ENCODE measurements at regions of chr2 and their contacts with region 1.

Region 1: GRCh38 chr2:238426568-238427434 is at the start of gene ASB1:
- DNase-seq: peak; percentile 84
- ATAC-seq: peak; percentile 81
- H3K4me3 Mint-ChIP-seq: peak within 1 kb of the TSS; percentile 91
- H3K27ac Mint-ChIP-seq: peak within 1 kb of the TSS; percentile 96
- H3K4me1 Mint-ChIP-seq: peaks cover 35% of the 10 kb centered on the region
- H3K27me3 Mint-ChIP-seq: no peaks in the 10 kb centered on the region
- total RNA-seq, gene ASB1: 31.7 to 33.4 TPM

Region 2: DNA sequence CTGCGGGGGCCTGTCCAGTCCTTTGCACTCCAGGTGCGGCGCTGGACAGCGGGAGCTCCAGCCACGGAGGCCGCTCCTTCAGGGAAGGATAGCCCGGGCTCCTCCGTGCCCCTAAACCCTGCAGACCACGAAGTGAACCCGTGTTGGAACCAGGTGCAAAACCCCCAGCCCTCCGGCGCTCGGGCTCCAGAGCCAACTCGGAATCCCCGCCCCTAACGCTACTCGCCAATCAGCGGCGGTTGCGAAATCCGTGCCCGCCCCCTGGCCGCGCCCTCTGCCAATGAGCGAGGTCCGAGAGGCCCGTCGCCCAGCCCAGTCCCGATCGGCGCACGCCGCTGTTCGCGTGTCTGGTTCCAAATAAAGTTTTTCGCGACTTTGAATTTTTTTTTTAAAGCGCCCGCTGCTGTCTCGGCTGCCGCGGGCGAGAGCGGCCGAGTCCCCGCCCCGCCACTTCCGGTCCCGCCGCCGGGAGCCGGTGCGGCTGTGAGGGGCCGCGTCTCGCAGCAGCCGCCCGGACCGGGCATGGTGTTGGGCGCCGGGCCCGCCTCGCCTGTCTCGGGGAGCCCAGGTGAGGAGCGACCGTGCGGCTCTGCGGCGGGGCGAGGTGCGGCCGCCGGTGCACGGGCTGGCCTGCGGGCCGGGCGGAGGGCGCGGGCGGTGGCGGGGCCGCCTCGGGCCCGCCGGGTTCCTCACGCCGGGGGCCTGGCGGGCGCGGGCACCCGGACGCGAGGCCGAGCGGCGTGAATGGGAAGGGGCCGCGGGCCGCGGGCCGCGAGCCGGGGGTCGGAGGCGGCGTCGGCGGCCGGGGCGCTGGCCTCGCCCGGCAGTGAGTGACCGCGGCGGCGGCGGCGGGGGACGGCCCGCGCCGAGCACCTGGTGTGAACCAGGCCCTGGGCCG is 460.0 kb before region 1 on chr2 and contains the start of gene UBE2F:
- CTCF ChIA-PET with region 1: no interaction called
- POLR2A ChIA-PET with region 1: no interaction called
- intact Hi-C with region 1: loop called in 1 of 2 experiments (anchors 2 kb)
- DNase-seq: peak; percentile 98
- ATAC-seq: peak; percentile 95
- H3K4me3 Mint-ChIP-seq: peak within 1 kb of the TSS; percentile 78
- H3K27ac Mint-ChIP-seq: peak within 1 kb of the TSS; percentile 88
- H3K4me1 Mint-ChIP-seq: peaks cover 38% of the 10 kb centered on the region
- H3K27me3 Mint-ChIP-seq: no peaks in the 10 kb centered on the region
- total RNA-seq, gene UBE2F: 59.2 to 75.5 TPM

Region 3: GRCh38 chr2:238288650-238289573 is 137.9 kb before region 1 on chr2:
- CTCF ChIA-PET with region 1: no interaction called
- POLR2A ChIA-PET with region 1: no interaction called
- intact Hi-C with region 1: loop called (anchors 1 to 5 kb)
- DNase-seq: peak; percentile 98
- ATAC-seq: peak; percentile 86
- H3K4me3 Mint-ChIP-seq: peak overlapping the region; percentile 74
- H3K27ac Mint-ChIP-seq: peak overlapping the region; percentile 82
- H3K4me1 Mint-ChIP-seq: peaks cover 32% of the 10 kb centered on the region
- H3K27me3 Mint-ChIP-seq: no peaks in the 10 kb centered on the region

Region 4: GRCh38 chr2:238370823-238371372 is 55.9 kb before region 1 on chr2:
- CTCF ChIA-PET with region 1: interaction called, 4 read pairs
- POLR2A ChIA-PET with region 1: no interaction called
- intact Hi-C with region 1: loop called in 1 of 2 experiments (anchors 5 kb)
- DNase-seq: peak; percentile 73
- ATAC-seq: peak; percentile 88
- H3K4me3 Mint-ChIP-seq: no peak overlapping the region
- H3K27ac Mint-ChIP-seq: no peak overlapping the region
- H3K4me1 Mint-ChIP-seq: peaks cover 6% of the 10 kb centered on the region
- H3K27me3 Mint-ChIP-seq: no peaks in the 10 kb centered on the region

Region 5: GRCh38 chr2:238448031-238448955 is 21.5 kb after region 1 on chr2:
- CTCF ChIA-PET with region 1: no interaction called
- POLR2A ChIA-PET with region 1: no interaction called
- intact Hi-C with region 1: no loop called
- DNase-seq: no peak
- ATAC-seq: peak; percentile 44
- H3K4me3 Mint-ChIP-seq: no peak overlapping the region
- H3K27ac Mint-ChIP-seq: peak overlapping the region; percentile 21
- H3K4me1 Mint-ChIP-seq: peaks cover 3% of the 10 kb centered on the region
- H3K27me3 Mint-ChIP-seq: no peaks in the 10 kb centered on the region

Region 6: GRCh38 chr2:239216614-239217273 is 789.9 kb after region 1 on chr2:
- CTCF ChIA-PET with region 1: no interaction called
- POLR2A ChIA-PET with region 1: no interaction called
- intact Hi-C with region 1: loop called in 1 of 2 experiments (anchors 5 kb)
- DNase-seq: peak; percentile 71
- ATAC-seq: peak; percentile 97
- H3K4me3 Mint-ChIP-seq: peak overlapping the region; percentile 66
- H3K27ac Mint-ChIP-seq: peak overlapping the region; percentile 95
- H3K4me1 Mint-ChIP-seq: peaks cover 73% of the 10 kb centered on the region
- H3K27me3 Mint-ChIP-seq: no peaks in the 10 kb centered on the region

Measured in activated CD4-positive, alpha-beta T cell treated with anti-CD3 and anti-CD28 coated beads for 36 hours (primary cell).